ENCODE measurements at regions of chr11 and their contacts with region 1.

Region 1: GRCh38 chr11:83827940-83828554 is 541.9 kb upstream of the CCDC90B start:
- DNase-seq: no peak
- ATAC-seq: no peak
- H3K4me3 ChIP-seq: peak overlapping the region in 1 of 2 donors; percentile 41
- H3K27ac ChIP-seq: no peak overlapping the region
- H3K4me1 ChIP-seq: no peaks in the 10 kb centered on the region
- H3K27me3 ChIP-seq: no peaks in the 10 kb centered on the region

Region 2: GRCh38 chr11:82682003-82682751 is 1145.9 kb before region 1 on chr11:
- intact Hi-C with region 1: loop called in 1 of 2 experiments (anchors 10 kb)
- DNase-seq: no peak
- ATAC-seq: peak; percentile 83
- H3K4me3 ChIP-seq: no peak overlapping the region
- H3K27ac ChIP-seq: no peak overlapping the region
- H3K4me1 ChIP-seq: no peaks in the 10 kb centered on the region
- H3K27me3 ChIP-seq: peaks cover 0 to 2% of the 10 kb centered on the region in 2 donors

Region 3: DNA sequence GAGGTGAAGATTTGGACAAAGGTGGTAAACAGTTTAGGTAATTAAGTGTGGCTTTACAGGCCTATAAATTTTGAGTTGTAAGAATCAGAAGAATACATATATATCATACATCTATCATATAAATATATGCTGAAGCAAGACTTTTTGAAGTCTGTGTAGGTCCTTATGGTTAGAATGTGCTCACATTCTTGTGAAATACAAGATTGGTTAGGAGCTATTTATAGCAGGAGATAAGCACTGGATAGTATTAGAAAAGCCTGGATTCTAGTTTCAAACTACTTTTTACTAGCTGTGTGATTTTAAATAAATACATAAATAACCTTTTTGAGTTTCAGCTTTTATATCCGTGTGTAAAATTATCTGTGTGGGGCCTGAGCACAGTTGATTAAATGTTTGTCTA is 592.2 kb before region 1 on chr11:
- intact Hi-C with region 1: loop called in 1 of 2 experiments (anchors 10 kb)
- DNase-seq: no peak
- ATAC-seq: no peak
- H3K4me3 ChIP-seq: no peak overlapping the region
- H3K27ac ChIP-seq: no peak overlapping the region
- H3K4me1 ChIP-seq: no peaks in the 10 kb centered on the region
- H3K27me3 ChIP-seq: no peaks in the 10 kb centered on the region

Measured in aorta (tissue), 5 donors.